Activated T-helper 2 cell treated with anti-CD3 and anti-CD28 coated beads, Interferon-gamma antibody, Interleukin-2, Interleukin-4, amounts not matched to agents 10 μg/mL and 5 μg/mL and 100 μg/mL, durations not matched to agents 14 hours and 24 hours and 36 hours (primary cell): ENCODE measurements at regions of chr10 and their contacts with region 1.

Region 1: GRCh38 chr10:22325272-22326144 is 4.6 kb downstream of the BMI1 start:
- DNase-seq: peak; percentile 65
- H3K4me3 Mint-ChIP-seq: peak overlapping the region; percentile 83
- H3K27ac Mint-ChIP-seq: peak overlapping the region; percentile 1
- H3K4me1 Mint-ChIP-seq: peaks cover 35% of the 10 kb centered on the region
- H3K27me3 Mint-ChIP-seq: peaks cover 26% of the 10 kb centered on the region

Region 2: GRCh38 chr10:22379059-22379458 is 53.6 kb after region 1 on chr10:
- intact Hi-C with region 1: loop called (anchors 2 kb)
- DNase-seq: no peak
- H3K4me3 Mint-ChIP-seq: no peak overlapping the region
- H3K27ac Mint-ChIP-seq: peak overlapping the region; percentile 69
- H3K4me1 Mint-ChIP-seq: peaks cover 20% of the 10 kb centered on the region
- H3K27me3 Mint-ChIP-seq: no peaks in the 10 kb centered on the region